Esophagus squamous epithelium (tissue), 5 donors: ENCODE measurements at regions of chr5 and their contacts with region 1.

Region 1: GRCh38 chr5:62354028-62354874 is 48.2 kb downstream of the KIF2A start:
- DNase-seq: no peak
- H3K4me3 ChIP-seq: no peak overlapping the region
- H3K27ac ChIP-seq: peak overlapping the region in 1 of 4 donors; percentile 28
- H3K4me1 ChIP-seq: peaks cover 0 to 6% (median 0%) of the 10 kb centered on the region in 3 donors
- H3K27me3 ChIP-seq: no peaks in the 10 kb centered on the region
- CTCF ChIP-seq: peak in 5 of 6 experiments; percentile 58 to 79 (median 75)
- POLR2A ChIP-seq: no peak

Region 2: DNA sequence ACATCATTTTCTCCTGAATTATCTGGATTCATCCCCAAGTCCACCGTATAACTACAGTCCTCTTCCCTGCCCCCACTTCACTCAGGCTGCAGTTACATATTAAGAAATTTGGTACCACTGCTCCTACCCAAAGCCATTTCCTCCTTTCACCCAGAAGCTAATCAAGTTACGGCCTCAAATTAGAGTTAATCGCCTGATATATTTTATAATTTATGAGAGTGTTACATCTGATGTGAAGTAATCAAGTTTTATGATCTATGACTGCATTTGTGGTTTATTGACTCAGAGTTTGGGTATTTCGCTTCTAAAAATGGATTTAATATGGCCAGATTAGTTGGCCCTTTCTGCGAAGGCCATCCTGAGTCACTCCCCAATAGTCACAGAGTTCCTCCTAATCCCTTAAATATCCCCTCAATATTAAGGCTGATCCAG is 271.9 kb before region 1 on chr5:
- intact Hi-C with region 1: no loop called
- DNase-seq: no peak
- H3K4me3 ChIP-seq: no peak overlapping the region
- H3K27ac ChIP-seq: no peak overlapping the region
- H3K4me1 ChIP-seq: no peaks in the 10 kb centered on the region
- H3K27me3 ChIP-seq: peaks cover 0 to 4% (median 0%) of the 10 kb centered on the region in 4 donors
- CTCF ChIP-seq: no peak
- POLR2A ChIP-seq: no peak

Region 3: GRCh38 chr5:62214701-62215100 is 139.6 kb before region 1 on chr5:
- intact Hi-C with region 1: loop called (anchors 10 kb)
- DNase-seq: no peak
- H3K4me3 ChIP-seq: no peak overlapping the region
- H3K27ac ChIP-seq: no peak overlapping the region
- H3K4me1 ChIP-seq: no peaks in the 10 kb centered on the region
- H3K27me3 ChIP-seq: peaks cover 0 to 11% (median 0%) of the 10 kb centered on the region in 4 donors
- CTCF ChIP-seq: no peak
- POLR2A ChIP-seq: no peak